ENCODE measurements at regions of chr12 and their contacts with region 1.

Region 1: DNA sequence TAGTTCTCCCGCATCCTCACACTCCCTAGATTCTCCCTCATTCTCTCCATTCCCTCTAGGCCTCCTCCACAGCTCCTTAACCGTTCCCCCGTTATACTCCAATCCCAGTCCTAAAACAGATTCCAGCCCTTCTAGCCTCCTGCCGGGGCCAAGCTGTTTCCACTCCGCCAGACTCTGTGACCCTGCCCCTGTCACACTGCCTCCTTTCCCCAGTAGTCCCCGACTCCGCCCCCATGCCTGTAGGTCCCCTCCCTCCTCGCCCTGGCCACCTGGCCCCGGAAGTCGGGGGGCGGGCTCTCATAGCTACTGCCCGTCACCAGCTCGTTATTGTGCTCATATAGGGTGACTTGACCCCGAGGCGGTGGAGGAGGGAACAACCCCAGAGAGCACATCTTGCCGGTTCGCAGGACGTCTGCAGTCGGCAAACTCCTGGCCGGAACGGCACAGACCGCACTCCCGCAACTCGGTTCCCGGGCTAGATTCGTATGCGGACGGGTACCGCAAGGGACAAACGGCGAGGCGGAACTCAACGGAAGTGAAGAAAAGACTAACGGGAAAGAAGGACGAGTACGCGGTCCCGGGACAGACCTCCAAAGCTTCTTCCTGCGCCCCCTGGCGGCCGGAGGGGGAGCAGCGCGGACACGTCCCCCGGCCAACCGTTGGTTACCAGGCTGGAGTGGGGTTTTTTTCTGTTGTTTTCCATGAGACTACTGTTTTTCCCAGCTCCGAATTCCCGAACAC is at the start of gene AAAS:
- DNase-seq: peak; percentile 97
- H3K4me3 ChIP-seq: peak within 1 kb of the TSS; percentile 71
- H3K27ac ChIP-seq: peak within 1 kb of the TSS; percentile 91
- H3K4me1 ChIP-seq: peaks cover 18% of the 10 kb centered on the region
- H3K27me3 ChIP-seq: no peaks in the 10 kb centered on the region
- CTCF ChIP-seq: peak; percentile 100
- total RNA-seq, gene AAAS: 94.2 and 104 TPM in 2 replicates

Region 2: DNA sequence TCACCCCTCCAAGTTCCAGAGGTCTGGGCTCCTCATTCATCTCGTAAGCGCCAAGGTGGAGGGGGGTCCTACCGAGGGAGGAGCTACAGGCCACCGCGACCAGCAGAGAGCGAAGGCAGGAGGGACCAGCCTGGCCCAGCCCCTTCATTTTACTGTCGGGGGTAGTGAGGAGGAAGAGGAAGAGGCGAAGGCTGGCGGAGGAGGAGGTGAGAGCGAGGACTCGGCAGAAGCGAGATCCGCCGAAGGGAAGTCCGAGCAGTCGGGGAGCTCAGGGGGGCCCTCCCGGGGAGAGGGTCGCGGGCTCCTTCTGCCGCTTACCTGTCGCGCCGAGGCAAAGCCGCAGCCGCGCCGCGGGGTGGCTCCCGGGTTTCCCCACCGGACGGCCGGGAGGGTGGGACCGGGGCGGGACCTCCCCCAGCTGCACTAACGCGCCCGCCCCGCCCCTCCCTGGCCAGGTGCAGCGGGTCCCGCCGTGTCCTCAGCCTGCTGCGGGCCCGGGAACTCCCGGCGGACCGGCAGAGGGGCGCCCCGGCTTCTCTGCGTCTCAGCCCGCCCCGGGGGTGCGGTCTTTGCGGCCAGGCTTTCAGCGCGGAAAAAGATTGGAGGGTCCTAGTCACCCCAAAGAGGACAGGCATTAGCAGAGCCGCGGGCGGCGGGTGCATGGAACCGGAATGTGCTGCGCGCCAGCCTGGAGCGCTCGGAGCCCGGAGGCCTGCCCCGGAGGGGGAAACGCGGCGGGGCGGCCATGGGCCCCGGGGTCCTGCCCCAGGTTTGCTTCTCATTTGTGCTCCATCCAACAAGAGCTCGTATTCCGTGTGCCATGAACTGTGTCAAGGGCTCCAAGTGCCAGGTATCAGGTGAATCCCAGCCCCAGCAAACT is 1929.7 kb before region 1 on chr12 and contains the start of gene GALNT6:
- CTCF ChIA-PET with region 1: no interaction called
- POLR2A ChIA-PET with region 1: no interaction called
- intact Hi-C with region 1: no loop called
- DNase-seq: no peak
- H3K4me3 ChIP-seq: peak within 1 kb of the TSS; percentile 52
- H3K27ac ChIP-seq: no peak within 1 kb of the TSS
- H3K4me1 ChIP-seq: no peaks in the 10 kb centered on the region
- H3K27me3 ChIP-seq: peaks cover 10% of the 10 kb centered on the region
- CTCF ChIP-seq: no peak
- total RNA-seq, gene GALNT6: 0.24 and 0.26 TPM in 2 replicates

Region 3: DNA sequence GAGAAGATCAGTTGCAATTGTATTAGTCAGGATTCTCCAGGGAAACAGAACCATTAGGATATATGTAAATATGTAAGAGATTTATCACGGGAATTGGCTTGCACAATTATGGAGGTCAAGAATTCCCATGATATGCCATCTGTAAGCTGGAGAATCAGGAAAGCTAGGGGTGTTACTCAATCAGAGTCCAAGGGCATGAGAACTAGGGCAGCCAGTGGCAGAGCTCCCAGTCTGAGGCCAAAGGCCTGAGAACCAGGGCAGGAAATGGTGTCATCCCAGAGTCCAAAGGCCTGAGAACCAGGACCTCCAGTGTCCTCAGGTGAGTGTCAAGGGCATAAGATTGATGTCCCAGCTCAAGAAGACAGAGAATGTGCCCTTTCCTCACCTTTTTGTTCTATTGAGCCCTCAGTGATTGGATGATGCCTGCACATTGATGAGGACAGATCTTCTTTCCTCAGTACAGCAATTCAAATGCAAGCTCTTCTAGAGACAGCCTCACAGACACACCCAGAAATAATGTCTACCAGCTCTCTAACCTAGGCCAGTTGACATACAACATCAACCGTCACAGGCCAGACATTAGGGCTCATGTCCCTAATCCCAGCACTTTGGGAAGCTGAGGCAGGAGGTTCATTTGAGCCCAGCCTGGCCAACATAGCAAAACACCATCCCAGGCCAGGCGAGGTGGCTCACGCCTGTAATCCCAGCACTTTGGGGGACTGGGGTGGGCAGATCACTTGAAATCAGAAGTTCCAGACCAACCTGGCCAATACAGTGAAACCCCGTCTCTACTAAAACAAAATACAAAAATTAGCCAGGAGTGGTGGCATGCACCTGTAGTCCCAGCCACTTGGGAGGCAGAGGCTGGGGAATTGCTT is 175.6 kb before region 1 on chr12:
- CTCF ChIA-PET with region 1: no interaction called
- POLR2A ChIA-PET with region 1: no interaction called
- intact Hi-C with region 1: no loop called
- DNase-seq: no peak
- H3K4me3 ChIP-seq: no peak overlapping the region
- H3K27ac ChIP-seq: no peak overlapping the region
- H3K4me1 ChIP-seq: no peaks in the 10 kb centered on the region
- H3K27me3 ChIP-seq: no peaks in the 10 kb centered on the region
- CTCF ChIP-seq: no peak

Region 4: DNA sequence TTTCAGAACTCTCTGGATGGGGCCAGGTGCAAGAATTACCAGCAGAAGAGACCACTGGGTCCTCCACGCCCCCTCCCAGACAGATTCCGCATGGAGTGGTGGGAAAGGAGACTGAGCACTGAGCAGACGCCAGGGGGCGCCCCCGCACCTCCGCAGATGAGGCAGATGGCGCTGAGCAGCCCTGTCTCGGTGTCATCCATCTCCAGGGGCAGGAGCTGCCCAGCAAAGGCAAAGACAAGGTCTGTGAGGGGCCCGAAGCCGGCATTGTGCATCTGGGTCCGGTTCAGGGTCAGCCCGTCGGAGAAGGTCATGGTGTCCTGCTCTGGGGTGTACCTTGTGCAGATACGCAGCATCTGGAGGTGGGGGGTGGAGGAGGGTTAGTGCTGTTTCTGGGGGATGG is 107.9 kb before region 1 on chr12:
- CTCF ChIA-PET with region 1: interaction called, 24 read pairs
- POLR2A ChIA-PET with region 1: no interaction called
- intact Hi-C with region 1: no loop called
- DNase-seq: peak; percentile 86
- H3K4me3 ChIP-seq: no peak overlapping the region
- H3K27ac ChIP-seq: no peak overlapping the region
- H3K4me1 ChIP-seq: peaks cover 19% of the 10 kb centered on the region
- H3K27me3 ChIP-seq: no peaks in the 10 kb centered on the region
- CTCF ChIP-seq: peak; percentile 98

Region 5: DNA sequence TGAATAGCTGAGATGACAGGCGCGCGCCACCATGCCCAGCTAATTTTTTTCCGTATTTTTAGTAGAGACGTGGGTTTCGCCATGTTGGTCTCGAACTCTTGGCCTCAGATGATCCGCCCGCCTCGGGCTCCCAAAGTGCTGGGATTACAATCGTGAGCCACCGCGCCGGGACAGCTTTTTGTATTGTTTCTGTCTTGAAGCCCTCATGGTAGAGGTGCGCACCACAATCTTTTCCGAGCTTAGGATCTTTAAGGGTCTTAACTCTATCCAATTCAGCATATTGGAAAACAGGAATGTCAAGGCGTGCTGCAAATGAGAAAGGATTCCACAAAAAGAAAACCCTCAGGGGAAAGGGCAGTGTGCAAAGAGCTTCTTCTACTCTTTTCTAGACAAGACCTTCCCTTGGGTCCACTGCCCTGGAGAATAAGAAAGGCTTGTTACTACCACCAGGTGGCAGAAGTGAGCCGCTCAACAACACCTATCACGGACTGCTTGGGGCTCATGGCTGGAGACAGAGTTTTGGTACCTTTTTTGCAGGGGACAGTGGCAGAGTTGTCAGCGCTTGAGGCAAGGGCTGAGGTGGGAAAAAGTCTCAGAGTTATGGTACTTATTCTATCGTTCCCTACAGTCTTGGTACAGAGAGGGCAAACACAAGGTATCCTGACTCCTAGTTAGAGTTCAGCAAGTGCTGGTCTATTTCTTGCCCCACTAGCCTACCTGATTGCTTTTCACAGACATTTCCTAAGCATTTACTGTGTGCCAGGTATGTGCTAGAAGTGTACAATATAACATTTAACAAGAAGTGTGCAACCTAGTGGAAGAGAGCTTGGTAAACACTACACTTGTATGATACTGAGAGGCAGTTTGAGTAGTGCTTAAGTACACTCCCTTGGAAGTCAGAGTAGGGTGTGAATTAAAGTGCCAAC is 31.4 kb after region 1 on chr12:
- CTCF ChIA-PET with region 1: interaction called, 11 read pairs
- POLR2A ChIA-PET with region 1: no interaction called
- intact Hi-C with region 1: no loop called
- DNase-seq: peak; percentile 92
- H3K4me3 ChIP-seq: no peak overlapping the region
- H3K27ac ChIP-seq: no peak overlapping the region
- H3K4me1 ChIP-seq: no peaks in the 10 kb centered on the region
- H3K27me3 ChIP-seq: no peaks in the 10 kb centered on the region
- CTCF ChIP-seq: peak; percentile 90

Region 6: GRCh38 chr12:53461059-53461458 is 139.8 kb after region 1 on chr12:
- CTCF ChIA-PET with region 1: no interaction called
- POLR2A ChIA-PET with region 1: no interaction called
- intact Hi-C with region 1: no loop called
- DNase-seq: no peak
- H3K4me3 ChIP-seq: no peak overlapping the region
- H3K27ac ChIP-seq: no peak overlapping the region
- H3K4me1 ChIP-seq: peaks cover 8% of the 10 kb centered on the region
- H3K27me3 ChIP-seq: no peaks in the 10 kb centered on the region
- CTCF ChIP-seq: no peak

Region 7: GRCh38 chr12:53500776-53501614 is 179.8 kb after region 1 on chr12 and contains the start of gene TARBP2:
- CTCF ChIA-PET with region 1: interaction called, 5 read pairs
- POLR2A ChIA-PET with region 1: interaction called, 5 read pairs
- intact Hi-C with region 1: loop called (anchors 2 kb)
- DNase-seq: peak; percentile 100
- H3K4me3 ChIP-seq: peak within 1 kb of the TSS; percentile 54
- H3K27ac ChIP-seq: peak within 1 kb of the TSS; percentile 98
- H3K4me1 ChIP-seq: peaks cover 37% of the 10 kb centered on the region
- H3K27me3 ChIP-seq: no peaks in the 10 kb centered on the region
- CTCF ChIP-seq: no peak
- total RNA-seq, gene TARBP2: 62.4 and 70.9 TPM in 2 replicates

Measured in A673 (cell line).